Caco-2 (cell line): ENCODE measurements at regions of chr22 and their contacts with region 1.

Region 1: DNA sequence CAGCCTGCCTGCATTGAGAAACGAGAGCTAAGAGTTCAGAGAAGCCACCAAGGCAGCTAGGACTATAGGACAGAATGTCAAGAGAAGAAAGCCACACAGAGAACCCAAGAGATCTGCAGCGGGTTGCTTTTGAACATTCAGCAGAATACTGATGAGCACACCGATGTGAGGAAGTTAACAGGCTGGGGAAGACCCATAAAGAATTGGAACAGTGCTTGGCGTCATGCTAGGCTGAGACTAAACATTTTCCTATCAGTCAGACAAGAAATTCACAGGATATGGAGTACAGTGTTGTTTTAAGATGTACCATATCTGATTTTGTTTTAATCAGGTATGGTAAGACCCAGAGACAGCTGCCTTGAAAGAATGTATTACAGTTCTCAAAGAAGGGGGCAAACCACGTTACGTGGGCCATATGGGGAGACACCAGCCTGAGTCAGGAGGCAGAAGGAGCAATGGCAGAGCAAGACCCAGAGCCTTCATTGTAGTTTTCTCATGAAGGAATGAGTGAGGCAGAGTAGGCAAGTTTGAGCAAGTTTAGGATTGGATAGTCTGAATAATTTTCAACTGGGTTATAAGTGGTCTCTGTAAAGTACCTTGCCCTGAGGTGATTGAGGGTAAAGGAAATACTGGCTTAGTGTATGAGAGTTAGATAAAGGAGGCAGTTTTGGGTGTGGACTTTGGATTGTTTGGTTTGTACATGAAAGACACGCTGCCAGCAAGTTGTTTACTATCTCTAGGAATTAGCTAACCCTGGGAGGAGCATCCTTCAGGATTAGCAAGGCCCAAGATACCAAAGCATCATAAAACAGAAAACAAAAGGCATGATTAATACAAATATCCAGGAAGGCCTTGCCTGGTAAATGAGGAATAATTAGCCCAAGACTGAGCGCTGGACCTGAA is 14.3 kb downstream of the LRRC75B start:
- DNase-seq: peak; percentile 79 to 80
- H3K4me3 ChIP-seq: no peak overlapping the region
- H3K4me3 Mint-ChIP-seq: peak overlapping the region; percentile 38
- H3K27ac Mint-ChIP-seq: peak overlapping the region; percentile 84
- H3K4me1 ChIP-seq: peaks cover 47% of the 10 kb centered on the region
- H3K4me1 Mint-ChIP-seq: peaks cover 46% of the 10 kb centered on the region
- H3K27me3 ChIP-seq: no peaks in the 10 kb centered on the region
- H3K27me3 Mint-ChIP-seq: no peaks in the 10 kb centered on the region
- CTCF ChIP-seq: no peak

Region 2: GRCh38 chr22:24503137-24503842 is 75.3 kb before region 1 on chr22:
- CTCF ChIA-PET with region 1: no interaction called
- POLR2A ChIA-PET with region 1: no interaction called
- intact Hi-C with region 1: no loop called
- DNase-seq: peak; percentile 65 to 74
- H3K4me3 ChIP-seq: no peak overlapping the region
- H3K4me3 Mint-ChIP-seq: peak overlapping the region; percentile 29
- H3K27ac Mint-ChIP-seq: peak overlapping the region; percentile 80
- H3K4me1 ChIP-seq: peaks cover 94% of the 10 kb centered on the region
- H3K4me1 Mint-ChIP-seq: peaks cover 65% of the 10 kb centered on the region
- H3K27me3 ChIP-seq: no peaks in the 10 kb centered on the region
- H3K27me3 Mint-ChIP-seq: no peaks in the 10 kb centered on the region
- CTCF ChIP-seq: peak; percentile 70 to 76

Region 3: GRCh38 chr22:24592851-24593558 is 14.4 kb after region 1 on chr22 and contains the start of gene LRRC75B:
- CTCF ChIA-PET with region 1: interaction called, 3 read pairs
- POLR2A ChIA-PET with region 1: no interaction called
- intact Hi-C with region 1: loop called (anchors 1 kb)
- DNase-seq: peak; percentile 92 to 95
- H3K4me3 ChIP-seq: peak within 1 kb of the TSS; percentile 82
- H3K4me3 Mint-ChIP-seq: peak within 1 kb of the TSS; percentile 86
- H3K27ac Mint-ChIP-seq: peak within 1 kb of the TSS; percentile 79
- H3K4me1 ChIP-seq: peaks cover 10% of the 10 kb centered on the region
- H3K4me1 Mint-ChIP-seq: no peaks in the 10 kb centered on the region
- H3K27me3 ChIP-seq: no peaks in the 10 kb centered on the region
- H3K27me3 Mint-ChIP-seq: no peaks in the 10 kb centered on the region
- CTCF ChIP-seq: no peak
- total RNA-seq, gene LRRC75B: 18.6 and 20.4 TPM in 2 replicates